Activated B cell treated with CpG ODN at 0.5 μM for 24 hours (primary cell): ENCODE measurements at regions of chr14 and their contacts with region 1.

Region 1: GRCh38 chr14:63641473-63642228 is at the start of gene WDR89:
- DNase-seq: peak; percentile 84
- ATAC-seq: peak; percentile 83
- H3K4me3 Mint-ChIP-seq: peak within 1 kb of the TSS; percentile 92
- H3K27ac Mint-ChIP-seq: peak within 1 kb of the TSS; percentile 98
- H3K4me1 Mint-ChIP-seq: peaks cover 34% of the 10 kb centered on the region
- H3K27me3 Mint-ChIP-seq: no peaks in the 10 kb centered on the region
- CTCF ChIP-seq: no peak
- total RNA-seq, gene WDR89: 21.9 and 24.4 TPM in 2 replicates

Region 2: GRCh38 chr14:63388763-63389431 is 252.8 kb before region 1 on chr14:
- CTCF ChIA-PET with region 1: interaction called, 5 read pairs
- POLR2A ChIA-PET with region 1: no interaction called
- intact Hi-C with region 1: loop called (anchors 2 kb)
- DNase-seq: peak; percentile 17
- ATAC-seq: peak; percentile 81
- H3K4me3 Mint-ChIP-seq: no peak overlapping the region
- H3K27ac Mint-ChIP-seq: no peak overlapping the region
- H3K4me1 Mint-ChIP-seq: peaks cover 3% of the 10 kb centered on the region
- H3K27me3 Mint-ChIP-seq: no peaks in the 10 kb centered on the region
- CTCF ChIP-seq: no peak

Region 3: DNA sequence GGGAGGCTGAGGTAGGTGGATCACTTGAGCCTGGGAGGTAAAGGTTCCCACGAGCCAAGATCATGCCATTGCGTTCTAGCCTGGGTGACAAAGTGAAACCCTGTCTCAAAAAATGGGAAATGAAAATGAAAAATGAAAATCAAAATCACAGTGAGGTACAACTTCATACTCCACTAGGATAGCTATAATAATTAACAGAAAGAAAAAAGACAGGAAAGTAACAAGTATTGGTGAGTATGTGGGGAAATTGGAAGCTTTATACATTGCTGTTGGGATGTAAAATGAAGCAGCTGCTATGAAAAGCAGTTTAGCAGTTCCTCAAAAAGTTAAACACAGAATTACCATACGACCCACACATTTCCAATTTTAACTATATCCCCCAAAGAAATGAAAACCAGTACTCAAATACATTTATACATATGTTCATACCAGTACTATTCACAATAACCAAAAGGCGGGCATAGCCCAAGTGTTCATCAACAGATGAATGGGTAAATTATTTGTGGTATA is 64.0 kb after region 1 on chr14:
- CTCF ChIA-PET with region 1: no interaction called
- POLR2A ChIA-PET with region 1: interaction called, 12 read pairs
- intact Hi-C with region 1: no loop called
- DNase-seq: no peak
- ATAC-seq: peak; percentile 75
- H3K4me3 Mint-ChIP-seq: peak overlapping the region; percentile 52
- H3K27ac Mint-ChIP-seq: peak overlapping the region; percentile 83
- H3K4me1 Mint-ChIP-seq: peaks cover 80% of the 10 kb centered on the region
- H3K27me3 Mint-ChIP-seq: no peaks in the 10 kb centered on the region
- CTCF ChIP-seq: no peak

Region 4: GRCh38 chr14:63727774-63728728 is 86.4 kb after region 1 on chr14 and contains the start of gene SGPP1:
- CTCF ChIA-PET with region 1: interaction called, 4 read pairs
- POLR2A ChIA-PET with region 1: interaction called, 47 read pairs
- intact Hi-C with region 1: loop called (anchors 1 kb)
- DNase-seq: peak; percentile 82
- ATAC-seq: peak; percentile 91
- H3K4me3 Mint-ChIP-seq: peak within 1 kb of the TSS; percentile 99
- H3K27ac Mint-ChIP-seq: peak within 1 kb of the TSS; percentile 96
- H3K4me1 Mint-ChIP-seq: peaks cover 42% of the 10 kb centered on the region
- H3K27me3 Mint-ChIP-seq: no peaks in the 10 kb centered on the region
- CTCF ChIP-seq: no peak
- total RNA-seq, gene SGPP1: 20.9 and 21.2 TPM in 2 replicates

Region 5: GRCh38 chr14:63745858-63746425 is 104.3 kb after region 1 on chr14:
- CTCF ChIA-PET with region 1: no interaction called
- POLR2A ChIA-PET with region 1: interaction called, 12 read pairs
- intact Hi-C with region 1: loop called (anchors 5 kb)
- DNase-seq: peak; percentile 36
- ATAC-seq: peak; percentile 75
- H3K4me3 Mint-ChIP-seq: peak overlapping the region; percentile 63
- H3K27ac Mint-ChIP-seq: peak overlapping the region; percentile 96
- H3K4me1 Mint-ChIP-seq: peaks cover 47% of the 10 kb centered on the region
- H3K27me3 Mint-ChIP-seq: no peaks in the 10 kb centered on the region
- CTCF ChIP-seq: no peak

Region 6: GRCh38 chr14:65102441-65103149 is 1460.9 kb after region 1 on chr14 and contains the start of gene MAX:
- CTCF ChIA-PET with region 1: no interaction called
- POLR2A ChIA-PET with region 1: no interaction called
- intact Hi-C with region 1: loop called (anchors 5 kb)
- DNase-seq: peak; percentile 92
- ATAC-seq: peak; percentile 86
- H3K4me3 Mint-ChIP-seq: peak within 1 kb of the TSS; percentile 89
- H3K27ac Mint-ChIP-seq: peak within 1 kb of the TSS; percentile 95
- H3K4me1 Mint-ChIP-seq: peaks cover 42% of the 10 kb centered on the region
- H3K27me3 Mint-ChIP-seq: no peaks in the 10 kb centered on the region
- CTCF ChIP-seq: no peak
- total RNA-seq, gene MAX: 115 and 116 TPM in 2 replicates